ENCODE measurements at regions of chr14 and their contacts with region 1.

Region 1: DNA sequence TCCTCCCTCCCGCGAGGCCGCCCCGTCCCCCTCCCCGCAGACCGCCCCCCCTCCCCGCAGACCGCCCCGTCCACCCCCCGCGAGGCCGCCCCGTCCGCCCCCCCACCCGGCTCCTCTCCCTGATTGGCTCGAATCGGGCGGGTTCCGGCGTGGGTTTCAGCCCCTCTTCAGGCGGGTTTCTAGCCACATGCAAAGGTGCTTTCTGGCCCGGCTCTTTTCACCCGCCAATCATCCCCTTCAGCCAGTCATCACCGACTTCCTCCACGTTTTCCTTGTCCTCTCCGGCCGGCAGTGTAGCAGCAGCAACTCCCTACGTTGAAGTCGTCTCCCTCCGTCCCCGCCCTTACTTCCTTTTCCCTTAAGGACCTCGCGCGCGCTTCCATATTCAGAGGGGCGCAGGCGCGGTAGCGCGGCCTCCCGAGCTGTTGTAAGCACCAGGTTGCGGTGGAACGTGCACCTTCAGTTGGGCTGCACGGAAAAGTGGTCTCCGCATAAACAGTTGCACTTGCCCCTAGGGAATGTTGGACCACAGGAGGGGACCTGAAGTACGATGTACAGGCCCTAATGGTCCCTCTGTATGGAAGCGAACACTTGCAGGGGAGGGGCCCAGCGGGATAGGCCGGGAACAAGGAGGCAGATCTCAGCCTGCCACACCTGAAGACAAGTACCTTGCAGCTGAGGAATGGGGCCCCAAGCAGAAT is 44.6 kb upstream of the ESR2 start:
- DNase-seq: peak; percentile 67 to 92 (median 80)
- ATAC-seq: peak; percentile 83 to 88
- H3K4me3 Mint-ChIP-seq: peak overlapping the region; percentile 84 to 98 (median 94)
- H3K27ac Mint-ChIP-seq: peak overlapping the region; percentile 78 to 96 (median 92)
- H3K4me1 Mint-ChIP-seq: peaks cover 9 to 24% (median 21%) of the 10 kb centered on the region in 4 donors
- H3K27me3 Mint-ChIP-seq: no peaks in the 10 kb centered on the region

Region 2: DNA sequence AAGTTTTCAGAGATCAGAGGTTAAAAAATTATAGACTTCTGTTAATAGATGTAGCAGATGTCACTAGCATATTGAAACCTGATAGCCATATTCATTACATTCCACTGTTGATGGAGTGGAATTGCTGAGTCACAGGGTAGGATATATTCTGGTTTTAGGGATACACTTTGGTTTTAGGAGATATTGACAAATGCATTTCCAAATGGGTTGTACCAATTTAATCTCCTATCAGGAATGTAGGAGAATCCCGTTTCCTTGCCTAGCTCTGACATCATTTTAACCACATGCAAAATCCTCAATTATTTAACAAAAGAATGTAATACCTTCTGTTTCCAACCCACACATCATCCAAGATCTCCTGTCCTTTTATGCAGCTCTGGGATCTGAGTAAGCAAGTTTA is 13.9 kb before region 1 on chr14:
- POLR2A ChIA-PET with region 1: no interaction called
- DNase-seq: no peak
- ATAC-seq: no peak
- H3K4me3 Mint-ChIP-seq: no peak overlapping the region
- H3K27ac Mint-ChIP-seq: no peak overlapping the region
- H3K4me1 Mint-ChIP-seq: no peaks in the 10 kb centered on the region
- H3K27me3 Mint-ChIP-seq: peaks cover 0 to 9% (median 5%) of the 10 kb centered on the region in 5 donors

Region 3: DNA sequence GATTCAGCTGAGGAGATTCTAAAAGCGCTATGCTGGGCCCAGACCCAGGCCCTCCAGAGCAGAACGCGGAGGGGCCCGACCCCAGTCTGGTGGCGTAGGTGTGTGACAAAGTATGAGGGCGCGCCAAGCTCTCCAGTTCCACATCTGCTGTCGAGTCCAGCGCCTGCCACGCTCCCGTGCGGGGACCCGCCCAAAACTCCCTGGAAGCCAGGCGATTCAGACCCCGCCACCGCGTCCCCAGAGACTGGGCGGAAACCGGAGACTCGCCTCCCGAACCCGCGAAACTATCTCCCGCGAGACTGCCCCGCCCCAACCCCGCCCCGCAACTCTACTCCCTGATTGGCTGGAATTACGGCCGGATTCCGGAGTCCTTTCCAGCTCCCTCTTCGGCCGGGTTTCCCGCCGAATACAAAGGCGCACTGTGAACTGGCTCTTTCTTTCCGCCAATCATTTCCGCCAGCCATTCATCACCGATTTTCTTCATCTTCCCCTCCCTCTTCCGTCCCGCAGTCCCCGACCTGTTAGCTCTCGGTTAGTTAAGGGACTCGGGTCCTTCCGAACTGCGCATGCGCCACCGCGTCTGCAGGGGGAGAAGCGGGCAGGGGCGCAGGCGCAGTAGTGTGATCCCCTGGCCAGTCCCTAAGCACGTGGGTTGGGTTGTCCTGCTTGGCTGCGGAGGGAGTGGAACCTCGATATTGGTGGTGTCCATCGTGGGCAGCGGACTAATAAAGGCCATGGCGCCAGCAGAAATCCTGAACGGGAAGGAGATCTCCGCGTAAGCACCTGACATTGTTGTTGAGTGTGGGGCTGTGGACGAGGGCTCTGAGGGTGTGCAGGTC is 49.1 kb after region 1 on chr14 and contains the start of gene MTHFD1:
- POLR2A ChIA-PET with region 1: interaction called, 13 read pairs
- DNase-seq: peak; percentile 92 to 99 (median 96)
- ATAC-seq: peak; percentile 86 to 88
- H3K4me3 Mint-ChIP-seq: peak within 1 kb of the TSS; percentile 91 to 99 (median 97)
- H3K27ac Mint-ChIP-seq: peak within 1 kb of the TSS; percentile 88 to 98 (median 96)
- H3K4me1 Mint-ChIP-seq: peaks cover 20 to 43% (median 37%) of the 10 kb centered on the region in 4 donors
- H3K27me3 Mint-ChIP-seq: no peaks in the 10 kb centered on the region
- polyA plus RNA-seq, gene MTHFD1: 34.9 to 44.2 (median 41.2) TPM

Measured in naive thymus-derived CD8-positive, alpha-beta T cell (primary cell).